ENCODE measurements at regions of chr17 and their contacts with region 1.

Region 1: DNA sequence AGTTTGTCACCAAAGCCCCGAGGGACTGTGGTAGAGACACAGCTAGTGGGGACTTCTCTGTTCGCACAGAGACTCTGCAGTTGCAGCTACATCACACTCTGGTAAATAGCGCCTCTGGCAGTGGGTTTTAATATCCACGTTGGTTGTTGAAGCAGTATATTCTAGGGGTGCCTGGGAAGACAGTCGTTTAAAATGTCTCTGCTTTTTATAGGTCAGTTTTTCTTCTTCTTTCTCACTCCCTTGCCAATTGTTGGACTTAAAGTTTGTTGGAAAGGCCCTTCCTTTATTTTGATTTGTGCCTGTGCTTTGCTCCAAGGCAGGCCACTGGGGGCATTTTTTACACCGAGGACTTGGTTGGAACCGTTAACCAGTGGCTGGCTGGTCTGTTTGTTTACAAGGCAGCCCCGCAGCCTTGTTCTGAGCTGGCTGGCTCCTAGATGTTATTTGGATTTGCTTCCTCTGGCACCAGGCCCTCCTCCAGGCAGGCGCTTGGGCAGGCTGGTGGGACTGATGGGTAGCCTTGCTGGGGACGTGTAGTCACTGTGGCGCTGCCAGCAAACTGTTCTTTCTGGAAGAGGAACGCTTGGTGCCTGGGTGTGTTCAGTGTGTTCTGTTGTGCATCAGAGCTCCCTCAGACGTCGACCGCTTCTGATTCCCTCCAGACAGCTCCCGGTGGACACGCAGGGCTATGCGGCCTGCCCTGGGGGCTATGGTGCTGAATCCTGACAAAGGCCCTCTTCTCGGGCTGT is 218.2 kb upstream of the CHMP6 start:
- DNase-seq: no peak
- H3K4me3 ChIP-seq: no peak overlapping the region
- H3K4me3 Mint-ChIP-seq: no peak overlapping the region
- H3K27ac ChIP-seq: no peak overlapping the region
- H3K27ac Mint-ChIP-seq: peak overlapping the region in 3 of 7 donors; percentile 17 to 44 (median 24)
- H3K4me1 ChIP-seq: peaks cover 22% of the 10 kb centered on the region
- H3K4me1 Mint-ChIP-seq: peaks cover 22 to 68% (median 43%) of the 10 kb centered on the region in 4 donors
- H3K27me3 ChIP-seq: no peaks in the 10 kb centered on the region
- H3K27me3 Mint-ChIP-seq: no peaks in the 10 kb centered on the region

Region 2: DNA sequence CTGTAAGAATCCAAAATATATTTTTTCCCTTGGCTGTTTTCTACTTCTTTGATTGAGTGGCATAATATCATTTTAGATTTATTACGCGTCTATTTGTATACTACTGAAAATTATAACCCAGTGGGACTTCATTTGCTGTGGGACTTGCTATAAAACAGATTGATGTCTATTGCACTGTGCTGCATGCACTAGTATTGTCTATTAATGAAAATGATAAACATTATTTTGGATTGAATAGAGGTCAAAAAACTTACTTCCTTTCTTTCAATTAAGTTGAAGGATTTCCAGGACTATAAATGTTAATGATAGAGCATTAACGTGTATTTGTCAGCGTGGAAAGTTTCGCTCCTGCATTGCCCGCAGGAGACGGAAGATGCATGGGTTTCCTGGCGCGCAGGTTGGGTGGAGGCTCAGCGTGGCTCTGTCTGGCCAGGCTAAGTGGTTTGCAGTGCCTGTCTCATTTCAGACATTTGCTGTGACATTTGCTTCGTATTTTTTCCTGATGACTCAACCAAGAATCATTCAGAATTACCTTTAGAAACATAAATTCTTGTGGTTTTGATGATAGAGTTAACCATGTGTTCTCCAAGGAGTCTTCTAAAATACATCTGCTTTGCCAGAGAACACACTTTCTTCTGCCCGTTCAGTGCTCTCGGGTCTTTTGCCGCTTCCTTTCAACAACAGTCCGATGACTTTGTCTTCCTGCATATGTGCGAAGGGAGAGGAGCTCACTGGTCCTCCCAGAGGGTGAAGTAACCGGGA is 12.1 kb before region 1 on chr17:
- CTCF ChIA-PET with region 1: interaction called, 3 read pairs
- POLR2A ChIA-PET with region 1: interaction called, 11 read pairs
- intact Hi-C with region 1: no loop called
- DNase-seq: peak; percentile 45 to 87 (median 53)
- H3K4me3 ChIP-seq: peak overlapping the region in 1 of 2 donors; percentile 27
- H3K4me3 Mint-ChIP-seq: peak overlapping the region; percentile 73 to 87 (median 80)
- H3K27ac ChIP-seq: peak overlapping the region; percentile 49
- H3K27ac Mint-ChIP-seq: peak overlapping the region; percentile 89 to 96 (median 94)
- H3K4me1 ChIP-seq: peaks cover 72% of the 10 kb centered on the region
- H3K4me1 Mint-ChIP-seq: peaks cover 59 to 86% (median 73%) of the 10 kb centered on the region in 4 donors
- H3K27me3 ChIP-seq: no peaks in the 10 kb centered on the region
- H3K27me3 Mint-ChIP-seq: no peaks in the 10 kb centered on the region

Region 3: DNA sequence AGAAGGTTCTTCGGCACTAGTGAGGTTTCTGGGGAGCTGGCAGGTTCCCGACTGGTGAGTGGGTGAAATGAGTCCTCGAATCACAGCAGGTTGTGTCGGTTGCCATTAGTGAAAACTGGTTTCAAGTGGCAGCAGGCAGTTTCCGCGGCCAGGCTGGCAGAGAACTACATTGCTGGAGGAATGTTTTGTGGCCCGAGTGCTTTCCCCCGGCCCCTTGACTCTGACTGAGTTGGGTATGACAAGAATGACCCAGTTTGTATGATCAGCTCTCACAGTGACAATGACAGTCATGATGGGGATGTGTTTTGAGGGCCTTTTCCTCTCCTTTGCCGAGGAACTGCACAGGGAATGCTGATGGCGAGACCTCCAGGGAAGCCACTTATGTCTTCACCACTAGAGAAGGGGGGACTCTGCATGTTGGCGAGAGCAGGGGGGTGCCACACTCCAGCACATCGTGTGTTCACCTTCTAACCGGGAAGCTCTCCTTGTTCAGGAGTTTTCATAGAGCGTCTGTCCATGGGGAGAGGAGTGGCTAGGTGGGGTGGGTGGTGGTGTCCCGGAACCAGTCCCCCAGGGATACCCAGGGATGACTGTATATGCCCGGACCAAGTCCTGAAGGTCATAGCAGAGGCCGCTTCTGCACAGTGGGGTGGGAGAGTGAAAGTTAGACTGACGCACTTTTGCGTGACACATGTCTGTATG is 12.2 kb after region 1 on chr17:
- CTCF ChIA-PET with region 1: interaction called, 5 read pairs
- POLR2A ChIA-PET with region 1: interaction called, 32 read pairs
- intact Hi-C with region 1: no loop called
- DNase-seq: no peak
- H3K4me3 ChIP-seq: no peak overlapping the region
- H3K4me3 Mint-ChIP-seq: peak overlapping the region in 6 of 8 donors; percentile 38 to 61 (median 48)
- H3K27ac ChIP-seq: no peak overlapping the region
- H3K27ac Mint-ChIP-seq: peak overlapping the region; percentile 75 to 91 (median 81)
- H3K4me1 ChIP-seq: peaks cover 96% of the 10 kb centered on the region
- H3K4me1 Mint-ChIP-seq: peaks cover 62 to 97% (median 83%) of the 10 kb centered on the region in 4 donors
- H3K27me3 ChIP-seq: no peaks in the 10 kb centered on the region
- H3K27me3 Mint-ChIP-seq: no peaks in the 10 kb centered on the region

Measured in CD4-positive, alpha-beta memory T cell (primary cell).